H1 (cell line): ENCODE measurements at regions of chr11 and their contacts with region 1.

Region 1: DNA sequence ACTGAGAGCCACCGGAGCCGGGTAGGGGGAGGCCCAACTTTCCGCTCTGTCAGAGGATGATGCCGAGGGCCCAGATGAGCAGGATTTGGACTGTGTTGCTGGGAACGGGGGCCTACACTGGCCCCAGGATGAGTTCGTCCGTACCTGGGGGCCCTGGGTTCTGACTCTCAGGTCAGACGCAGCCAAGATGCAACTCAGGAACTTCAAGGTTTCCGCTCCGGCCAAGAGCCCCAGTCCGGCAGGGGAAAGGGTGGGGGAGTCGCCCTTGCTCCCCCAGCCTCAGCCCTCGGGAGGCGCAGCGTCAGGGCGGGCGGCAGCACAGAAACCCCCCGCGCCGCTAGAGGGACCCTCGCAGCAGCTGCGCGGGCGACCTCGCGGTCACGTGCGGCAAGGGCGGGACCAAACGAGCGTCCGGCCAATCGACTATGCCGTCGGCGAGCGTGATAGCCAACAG is 241 bp upstream of the ARL2 start:
- DNase-seq: peak in 1 of 2 experiments; percentile 78
- H3K4me3 ChIP-seq: peak overlapping the region; percentile 66 to 92 (median 86)
- H3K27ac ChIP-seq: peak overlapping the region; percentile 88
- H3K4me1 ChIP-seq: peaks cover 0 to 7% (median under 1%) of the 10 kb centered on the region in 4 experiments; a peak in 4 of 7 replicates
- H3K27me3 ChIP-seq: no peaks in the 10 kb centered on the region
- CTCF ChIP-seq: peak; percentile 53 to 73 (median 72); a peak in 3 of 4 replicates
- EP300 ChIP-seq: no peak
- POLR2A ChIP-seq: no peak
- RAD21 ChIP-seq: no peak

Region 2: GRCh38 chr11:64963072-64963631 is 50.6 kb before region 1 on chr11:
- CTCF ChIA-PET with region 1: no interaction called
- POLR2A ChIA-PET with region 1: no interaction called
- DNase-seq: no peak
- H3K4me3 ChIP-seq: no peak overlapping the region
- H3K27ac ChIP-seq: no peak overlapping the region
- H3K4me1 ChIP-seq: no peaks in the 10 kb centered on the region
- H3K27me3 ChIP-seq: no peaks in the 10 kb centered on the region
- CTCF ChIP-seq: no peak
- EP300 ChIP-seq: no peak
- POLR2A ChIP-seq: no peak
- RAD21 ChIP-seq: no peak

Region 3: GRCh38 chr11:64996710-64997380 is 16.9 kb before region 1 on chr11 and contains the start of gene BATF2:
- CTCF ChIA-PET with region 1: interaction called, 20 read pairs
- POLR2A ChIA-PET with region 1: interaction called, 20 read pairs
- DNase-seq: peak; percentile 49 to 78
- H3K4me3 ChIP-seq: peak within 1 kb of the TSS in 3 of 4 experiments; percentile 8 to 36 (median 23); a peak in 5 of 8 replicates
- H3K27ac ChIP-seq: peak within 1 kb of the TSS; percentile 50
- H3K4me1 ChIP-seq: peaks cover 0 to 9% (median 1%) of the 10 kb centered on the region in 4 experiments; a peak in 2 of 7 replicates
- H3K27me3 ChIP-seq: no peaks in the 10 kb centered on the region
- CTCF ChIP-seq: peak; percentile 72 to 97 (median 82)
- EP300 ChIP-seq: no peak
- POLR2A ChIP-seq: 0 out of 3 replicates have a peak, but pooled peaks of 1 of the 2 experiments have one; percentile 47
- RAD21 ChIP-seq: peak; percentile 69 to 77
- total RNA-seq, gene BATF2: 1.4 and 2.0 TPM in 2 replicates

Region 4: DNA sequence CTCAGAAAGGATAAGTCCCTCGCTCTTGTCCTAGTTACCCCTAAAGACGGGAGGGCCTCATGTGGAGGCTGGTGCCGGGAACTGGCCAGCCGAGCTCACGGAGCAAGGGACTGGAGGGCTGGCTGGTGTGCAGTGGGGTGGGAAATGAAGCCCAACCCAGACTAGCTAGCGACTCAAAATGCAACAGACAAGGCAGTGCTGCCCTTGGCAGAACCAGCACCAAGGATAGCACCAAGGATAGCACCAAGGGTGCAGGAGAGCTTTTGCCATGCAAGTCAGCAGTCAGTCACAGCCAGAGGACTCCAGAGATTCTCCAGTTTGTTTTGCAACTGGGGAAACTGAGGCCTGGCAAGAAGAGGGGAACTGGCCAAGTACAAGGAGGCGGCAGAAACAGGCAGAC is 10.4 kb before region 1 on chr11:
- CTCF ChIA-PET with region 1: interaction called, 20 read pairs
- POLR2A ChIA-PET with region 1: interaction called, 20 read pairs
- DNase-seq: no peak
- H3K4me3 ChIP-seq: no peak overlapping the region
- H3K27ac ChIP-seq: no peak overlapping the region
- H3K4me1 ChIP-seq: no peaks in the 10 kb centered on the region
- H3K27me3 ChIP-seq: no peaks in the 10 kb centered on the region
- CTCF ChIP-seq: no peak
- EP300 ChIP-seq: no peak
- POLR2A ChIP-seq: no peak
- RAD21 ChIP-seq: no peak

Region 5: GRCh38 chr11:65027213-65028067 is 13.7 kb after region 1 on chr11 and contains the start of gene SNX15:
- CTCF ChIA-PET with region 1: interaction called, 14 read pairs
- POLR2A ChIA-PET with region 1: interaction called, 3 read pairs
- DNase-seq: peak; percentile 68 to 95
- H3K4me3 ChIP-seq: peak within 1 kb of the TSS; percentile 31 to 65 (median 58)
- H3K27ac ChIP-seq: no peak within 1 kb of the TSS
- H3K4me1 ChIP-seq: peaks cover 0 to 4% (median 2%) of the 10 kb centered on the region in 4 experiments; a peak in 5 of 7 replicates
- H3K27me3 ChIP-seq: no peaks in the 10 kb centered on the region
- CTCF ChIP-seq: peak; percentile 13 to 49 (median 44)
- EP300 ChIP-seq: 0 out of 3 replicates have a peak, but pooled peaks of 1 of the 2 experiments have one; percentile 31
- POLR2A ChIP-seq: no peak
- RAD21 ChIP-seq: peak; percentile 16 to 28; a peak in 2 of 4 replicates
- total RNA-seq, gene SNX15: 18.3 and 19.6 TPM in 2 replicates

Region 6: DNA sequence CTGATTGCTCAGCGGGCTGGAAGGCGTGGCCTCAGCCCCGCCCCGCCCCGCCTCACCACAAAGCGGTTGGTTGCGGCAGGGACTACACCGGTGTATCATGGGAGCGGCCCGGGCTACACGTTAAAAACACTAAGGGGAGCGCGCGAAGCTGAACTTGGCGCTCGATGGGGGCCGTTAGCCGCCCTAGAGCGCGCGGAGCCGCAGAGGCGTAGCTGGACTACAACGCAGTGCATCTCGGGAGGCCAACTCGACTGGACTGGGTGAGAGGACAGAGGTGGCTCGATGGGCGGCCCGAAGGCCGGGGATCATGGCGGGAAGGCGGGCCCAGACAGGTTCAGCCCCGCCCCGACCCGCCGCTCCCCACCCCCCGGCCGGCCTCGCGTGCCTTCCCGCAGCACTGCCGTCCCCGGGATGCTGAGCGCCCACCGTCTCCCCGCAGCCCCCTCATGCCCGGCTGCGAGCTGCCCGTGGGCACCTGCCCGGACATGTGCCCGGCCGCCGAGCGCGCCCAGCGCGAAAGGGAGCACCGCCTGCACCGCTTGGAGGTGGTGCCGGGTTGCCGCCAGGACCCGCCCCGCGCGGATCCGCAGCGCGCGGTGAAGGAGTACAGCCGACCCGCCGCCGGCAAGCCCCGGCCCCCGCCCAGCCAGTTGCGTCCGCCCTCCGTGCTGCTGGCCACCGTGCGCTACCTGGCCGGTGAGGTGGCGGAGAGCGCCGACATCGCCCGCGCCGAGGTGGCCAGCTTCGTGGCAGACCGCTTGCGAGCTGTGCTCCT is 27.3 kb after region 1 on chr11 and contains the start of gene SAC3D1:
- CTCF ChIA-PET with region 1: interaction called, 12 read pairs
- POLR2A ChIA-PET with region 1: interaction called, 9 read pairs
- DNase-seq: peak; percentile 80 to 94
- H3K4me3 ChIP-seq: peak within 1 kb of the TSS; percentile 48 to 93 (median 80)
- H3K27ac ChIP-seq: peak within 1 kb of the TSS; percentile 85; the same call in 1 of the 2 replicates
- H3K4me1 ChIP-seq: no peaks in the 10 kb centered on the region; a peak in 2 of 7 replicates
- H3K27me3 ChIP-seq: no peaks in the 10 kb centered on the region
- CTCF ChIP-seq: no peak
- EP300 ChIP-seq: no peak
- POLR2A ChIP-seq: peak; percentile 58 to 60
- RAD21 ChIP-seq: no peak
- total RNA-seq, gene SAC3D1: 19.4 and 23.3 TPM in 2 replicates